Endothelial cell of umbilical vein (primary cell): ENCODE measurements at regions of chr1 and their contacts with region 1.

Region 1: GRCh38 chr1:26602378-26602959 is 72.9 kb downstream of the RPS6KA1 start:
- DNase-seq: peak; percentile 76
- H3K4me3 ChIP-seq: no peak overlapping the region
- H3K27ac ChIP-seq: no peak overlapping the region
- H3K4me1 ChIP-seq: no peaks in the 10 kb centered on the region
- H3K27me3 ChIP-seq: peaks cover 25 to 29% of the 10 kb centered on the region in 2 experiments
- CTCF ChIP-seq: peak; percentile 59 to 60
- POLR2A ChIP-seq: no peak

Region 2: DNA sequence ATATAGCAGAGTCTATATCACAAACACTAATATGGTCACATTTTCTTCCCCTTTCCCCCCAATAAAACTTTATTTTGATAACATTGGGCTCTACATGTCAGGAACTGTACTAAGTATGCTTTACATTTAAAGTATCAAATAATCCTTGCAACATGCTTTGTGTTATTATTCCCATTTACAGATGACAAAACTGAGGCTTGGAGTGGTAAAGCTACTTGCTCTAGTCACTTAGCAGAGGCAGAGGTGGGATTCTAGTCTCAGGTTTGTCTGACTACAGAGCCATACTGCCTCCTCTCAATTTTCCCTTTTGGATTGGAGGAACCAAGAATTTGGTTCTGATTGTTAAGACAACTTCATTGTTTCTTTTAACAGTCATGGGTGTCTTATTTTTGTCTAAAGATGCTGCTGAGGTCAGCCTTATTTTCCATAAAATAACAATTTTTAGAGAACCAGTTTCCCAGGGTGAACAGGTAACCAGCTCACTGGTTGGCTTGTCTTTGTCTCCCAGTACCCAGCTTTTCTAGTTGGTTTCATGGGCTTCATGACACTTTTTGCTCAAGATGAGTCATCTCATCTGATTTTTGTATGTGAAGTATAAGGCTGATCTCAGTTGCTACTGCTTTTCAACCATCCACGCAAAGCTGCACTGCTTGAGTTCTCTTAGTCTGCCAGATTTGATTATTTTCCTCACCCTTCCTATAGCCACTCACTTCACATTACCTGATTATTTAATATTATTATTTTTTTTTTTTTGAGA is 12.4 kb after region 1 on chr1:
- CTCF ChIA-PET with region 1: interaction called, 12 read pairs
- POLR2A ChIA-PET with region 1: no interaction called
- dilution Hi-C with region 1: no loop called
- intact Hi-C with region 1: no loop called
- DNase-seq: no peak
- H3K4me3 ChIP-seq: no peak overlapping the region
- H3K27ac ChIP-seq: no peak overlapping the region
- H3K4me1 ChIP-seq: peaks cover 7% of the 10 kb centered on the region
- H3K27me3 ChIP-seq: peaks cover 10 to 17% of the 10 kb centered on the region in 2 experiments
- CTCF ChIP-seq: no peak
- POLR2A ChIP-seq: no peak

Region 3: DNA sequence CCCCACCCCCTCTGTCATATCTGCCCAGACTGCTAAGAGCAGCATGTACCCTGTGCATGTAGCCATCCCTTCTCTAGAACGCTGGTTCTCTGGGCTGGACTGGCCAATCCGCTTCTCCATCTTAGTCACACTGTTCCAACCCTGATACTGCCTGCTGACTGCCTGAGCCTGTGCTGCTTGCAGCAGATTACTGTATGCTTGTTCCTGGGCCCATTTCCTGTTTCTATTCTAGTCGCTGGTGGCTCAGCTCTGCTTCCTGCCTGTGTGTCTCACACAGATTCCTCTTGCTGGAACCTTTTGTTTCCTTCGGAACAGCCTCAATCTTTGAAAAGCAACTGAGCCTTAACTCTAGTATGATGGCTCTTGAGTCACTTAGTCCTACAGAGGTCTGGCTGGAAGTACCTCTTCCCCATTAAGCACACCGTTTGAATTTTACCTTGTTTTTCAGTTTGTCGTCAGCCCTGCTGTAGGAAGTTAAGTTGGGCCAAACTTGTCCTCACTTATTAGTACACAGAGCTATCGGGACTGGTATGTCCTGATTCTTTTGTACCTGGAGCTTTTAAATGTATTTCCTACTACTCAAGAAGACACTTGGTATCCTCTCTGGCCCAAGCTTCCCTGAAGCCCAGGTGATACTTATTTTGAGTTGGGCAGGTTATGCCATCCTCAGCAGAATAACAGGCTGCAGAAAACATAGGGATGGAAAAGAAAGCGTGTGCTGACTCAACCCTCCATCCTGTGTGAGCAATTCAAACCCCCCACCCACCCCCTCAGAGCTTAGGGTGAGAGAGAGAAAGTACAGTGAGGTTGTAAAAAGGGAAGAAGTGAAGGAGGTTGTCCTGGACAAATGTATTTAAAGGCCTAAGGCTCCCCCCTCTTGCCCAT is 141.8 kb after region 1 on chr1:
- CTCF ChIA-PET with region 1: interaction called, 12 read pairs
- POLR2A ChIA-PET with region 1: no interaction called
- dilution Hi-C with region 1: no loop called
- intact Hi-C with region 1: no loop called
- DNase-seq: peak; percentile 98
- H3K4me3 ChIP-seq: peak overlapping the region in 1 of 3 experiments; percentile 35
- H3K27ac ChIP-seq: peak overlapping the region; percentile 82
- H3K4me1 ChIP-seq: peaks cover 27% of the 10 kb centered on the region
- H3K27me3 ChIP-seq: no peaks in the 10 kb centered on the region
- CTCF ChIP-seq: no peak
- POLR2A ChIP-seq: peak; percentile 25

Region 4: GRCh38 chr1:26799479-26800142 is 197.1 kb after region 1 on chr1:
- CTCF ChIA-PET with region 1: interaction called, 26 read pairs
- POLR2A ChIA-PET with region 1: no interaction called
- dilution Hi-C with region 1: no loop called
- intact Hi-C with region 1: no loop called
- DNase-seq: peak; percentile 55
- H3K4me3 ChIP-seq: peak overlapping the region in 1 of 3 experiments; percentile 57
- H3K27ac ChIP-seq: peak overlapping the region; percentile 72
- H3K4me1 ChIP-seq: peaks cover 12% of the 10 kb centered on the region
- H3K27me3 ChIP-seq: no peaks in the 10 kb centered on the region
- CTCF ChIP-seq: no peak
- POLR2A ChIP-seq: no peak

Region 5: DNA sequence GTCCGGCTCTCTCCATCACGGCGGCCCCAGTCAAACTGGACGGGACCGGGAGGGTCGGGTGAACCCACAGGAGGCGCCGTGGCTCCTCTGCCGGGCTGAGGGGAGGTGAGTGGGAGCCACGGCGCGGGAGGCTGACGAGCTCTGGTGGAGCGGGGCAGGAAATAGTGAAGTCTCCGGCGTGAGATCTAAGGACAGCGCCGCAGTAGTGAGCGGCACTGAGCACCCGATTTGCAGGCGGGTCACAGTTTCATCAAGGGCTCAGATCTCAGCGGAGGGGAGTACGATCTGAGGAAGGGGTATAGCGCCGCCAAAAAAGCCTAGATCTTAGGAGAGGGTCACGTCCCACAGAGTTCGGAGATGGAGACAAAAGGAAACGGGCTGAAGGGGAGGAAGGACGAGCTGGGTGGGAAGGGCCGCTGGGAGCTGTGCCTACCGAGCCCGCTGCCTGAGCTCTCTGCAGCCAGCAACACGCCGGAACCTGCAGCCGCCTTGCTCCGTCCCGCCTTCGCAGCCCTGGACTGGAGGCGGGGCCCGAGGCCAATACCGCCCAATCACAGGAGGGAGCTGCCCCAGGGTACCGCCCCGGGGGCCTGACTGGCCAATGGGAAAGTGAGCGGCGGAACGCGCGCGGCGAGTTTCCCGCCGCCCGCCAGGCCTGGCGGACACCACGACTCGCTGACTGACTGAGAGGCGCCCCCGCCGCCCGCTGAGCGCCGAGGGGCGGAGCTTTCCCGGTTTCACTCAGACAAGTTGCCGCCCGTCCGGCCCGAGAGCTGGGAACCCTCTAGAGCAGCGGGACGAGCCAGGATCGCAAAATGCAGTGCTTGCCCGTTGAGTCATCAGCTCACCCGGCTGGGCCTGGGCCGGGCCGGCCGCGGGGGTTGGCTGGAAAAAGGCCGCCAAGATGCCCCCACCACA is 262.4 kb after region 1 on chr1:
- CTCF ChIA-PET with region 1: interaction called, 20 read pairs
- POLR2A ChIA-PET with region 1: no interaction called
- dilution Hi-C with region 1: no loop called
- intact Hi-C with region 1: no loop called
- DNase-seq: peak; percentile 99
- H3K4me3 ChIP-seq: peak overlapping the region; percentile 38 to 73 (median 52)
- H3K27ac ChIP-seq: peak overlapping the region; percentile 91
- H3K4me1 ChIP-seq: peaks cover 11% of the 10 kb centered on the region
- H3K27me3 ChIP-seq: no peaks in the 10 kb centered on the region
- CTCF ChIP-seq: peak in 1 of 2 donors; percentile 8
- POLR2A ChIP-seq: peak; percentile 94